ENCODE measurements at regions of chr4 and their contacts with region 1.

Region 1: DNA sequence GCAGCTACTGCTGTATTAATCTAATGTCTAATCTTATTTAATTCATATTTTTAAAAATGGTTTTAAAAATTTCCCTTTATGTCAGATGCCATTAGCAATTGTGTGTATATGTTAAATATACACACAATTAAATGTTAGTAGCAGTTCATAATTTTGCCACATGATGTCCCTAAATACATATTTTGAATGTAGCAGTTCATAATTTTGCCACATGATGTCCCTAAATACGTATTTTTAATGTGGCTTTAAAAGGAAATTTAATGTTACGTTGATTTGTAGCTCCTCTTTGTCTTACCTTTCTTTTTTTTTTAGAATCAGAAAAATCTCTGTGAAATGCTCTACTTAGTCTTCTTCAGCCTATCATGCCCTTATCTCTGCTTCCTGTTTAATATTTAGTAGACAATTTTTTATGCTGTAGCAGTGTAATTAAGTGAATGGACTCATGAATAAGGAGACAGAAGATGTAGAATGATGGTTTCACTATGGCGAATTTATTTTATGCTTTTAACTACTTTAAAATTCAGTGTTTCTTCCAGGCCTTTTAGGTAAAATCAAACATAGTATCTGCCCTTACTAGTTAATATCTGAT is 26.1 kb downstream of the RBM46 start:
- DNase-seq: no peak
- ATAC-seq: no peak
- H3K4me3 Mint-ChIP-seq: no peak overlapping the region
- H3K27ac Mint-ChIP-seq: no peak overlapping the region
- H3K4me1 Mint-ChIP-seq: no peaks in the 10 kb centered on the region
- H3K27me3 Mint-ChIP-seq: no peaks in the 10 kb centered on the region
- CTCF ChIP-seq: no peak

Region 2: GRCh38 chr4:154982187-154983047 is 175.3 kb after region 1 on chr4:
- CTCF ChIA-PET with region 1: no interaction called
- POLR2A ChIA-PET with region 1: no interaction called
- intact Hi-C with region 1: loop called (anchors 5 kb)
- DNase-seq: no peak
- ATAC-seq: no peak
- H3K4me3 Mint-ChIP-seq: no peak overlapping the region
- H3K27ac Mint-ChIP-seq: no peak overlapping the region
- H3K4me1 Mint-ChIP-seq: no peaks in the 10 kb centered on the region
- H3K27me3 Mint-ChIP-seq: no peaks in the 10 kb centered on the region
- CTCF ChIP-seq: no peak

Region 3: GRCh38 chr4:155353923-155354540 is 546.9 kb after region 1 on chr4:
- CTCF ChIA-PET with region 1: no interaction called
- POLR2A ChIA-PET with region 1: no interaction called
- intact Hi-C with region 1: loop called (anchors 1 kb)
- DNase-seq: no peak
- ATAC-seq: peak; percentile 28
- H3K4me3 Mint-ChIP-seq: no peak overlapping the region
- H3K27ac Mint-ChIP-seq: no peak overlapping the region
- H3K4me1 Mint-ChIP-seq: no peaks in the 10 kb centered on the region
- H3K27me3 Mint-ChIP-seq: no peaks in the 10 kb centered on the region
- CTCF ChIP-seq: no peak

Region 4: GRCh38 chr4:155371432-155372043 is 564.4 kb after region 1 on chr4:
- CTCF ChIA-PET with region 1: interaction called, 3 read pairs
- POLR2A ChIA-PET with region 1: no interaction called
- intact Hi-C with region 1: loop called (anchors 1 kb)
- DNase-seq: no peak
- ATAC-seq: no peak
- H3K4me3 Mint-ChIP-seq: no peak overlapping the region
- H3K27ac Mint-ChIP-seq: no peak overlapping the region
- H3K4me1 Mint-ChIP-seq: peaks cover 8% of the 10 kb centered on the region
- H3K27me3 Mint-ChIP-seq: no peaks in the 10 kb centered on the region
- CTCF ChIP-seq: peak; percentile 64

Region 5: GRCh38 chr4:155787113-155787710 is 980.1 kb after region 1 on chr4:
- CTCF ChIA-PET with region 1: interaction called, 3 read pairs
- POLR2A ChIA-PET with region 1: no interaction called
- intact Hi-C with region 1: loop called (anchors 1 kb)
- DNase-seq: no peak
- ATAC-seq: peak; percentile 57
- H3K4me3 Mint-ChIP-seq: no peak overlapping the region
- H3K27ac Mint-ChIP-seq: no peak overlapping the region
- H3K4me1 Mint-ChIP-seq: no peaks in the 10 kb centered on the region
- H3K27me3 Mint-ChIP-seq: no peaks in the 10 kb centered on the region
- CTCF ChIP-seq: peak; percentile 17